GM18951 (cell line): ENCODE measurements at regions of chr13 and their contacts with region 1.

Region 1: GRCh38 chr13:43786773-43787517 is at the start of gene ENOX1:
- POLR2A ChIP-seq: no peak

Region 2: DNA sequence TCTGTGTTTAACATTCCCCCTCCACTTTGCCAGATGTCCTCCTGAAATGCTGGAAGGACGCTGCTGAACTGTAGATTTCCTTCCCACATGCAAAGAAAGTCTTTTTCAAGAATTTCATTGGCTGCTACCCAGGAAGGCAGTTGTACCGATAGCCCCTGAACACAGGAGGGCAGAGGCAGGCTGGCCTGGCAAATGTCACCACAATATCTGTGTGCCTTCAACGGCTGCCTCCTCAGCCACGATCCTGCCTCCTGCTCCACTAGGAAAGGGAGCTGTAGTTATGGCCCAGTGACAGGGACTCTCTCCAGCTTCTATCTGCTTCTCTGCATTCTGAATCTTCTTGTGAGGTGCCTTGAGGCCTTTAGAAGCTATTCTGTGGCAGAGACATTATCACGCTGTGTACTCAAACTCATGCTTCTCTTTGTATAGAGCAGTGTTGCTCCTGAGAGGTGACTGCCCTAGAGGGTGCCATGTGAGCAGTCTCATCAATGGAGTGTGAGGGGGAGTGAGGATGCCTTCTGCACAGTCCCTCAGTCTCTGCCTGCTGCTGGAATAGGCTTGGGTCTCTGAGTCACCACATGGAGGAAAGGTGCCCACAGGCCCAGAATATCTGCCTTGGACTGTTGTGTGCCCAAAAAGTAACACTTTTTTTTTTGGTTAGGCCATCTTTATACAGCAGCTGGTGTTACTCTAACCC is 483.8 kb before region 1 on chr13:
- in situ Hi-C with region 1: loop called (anchors 25 kb)
- POLR2A ChIP-seq: no peak

Region 3: DNA sequence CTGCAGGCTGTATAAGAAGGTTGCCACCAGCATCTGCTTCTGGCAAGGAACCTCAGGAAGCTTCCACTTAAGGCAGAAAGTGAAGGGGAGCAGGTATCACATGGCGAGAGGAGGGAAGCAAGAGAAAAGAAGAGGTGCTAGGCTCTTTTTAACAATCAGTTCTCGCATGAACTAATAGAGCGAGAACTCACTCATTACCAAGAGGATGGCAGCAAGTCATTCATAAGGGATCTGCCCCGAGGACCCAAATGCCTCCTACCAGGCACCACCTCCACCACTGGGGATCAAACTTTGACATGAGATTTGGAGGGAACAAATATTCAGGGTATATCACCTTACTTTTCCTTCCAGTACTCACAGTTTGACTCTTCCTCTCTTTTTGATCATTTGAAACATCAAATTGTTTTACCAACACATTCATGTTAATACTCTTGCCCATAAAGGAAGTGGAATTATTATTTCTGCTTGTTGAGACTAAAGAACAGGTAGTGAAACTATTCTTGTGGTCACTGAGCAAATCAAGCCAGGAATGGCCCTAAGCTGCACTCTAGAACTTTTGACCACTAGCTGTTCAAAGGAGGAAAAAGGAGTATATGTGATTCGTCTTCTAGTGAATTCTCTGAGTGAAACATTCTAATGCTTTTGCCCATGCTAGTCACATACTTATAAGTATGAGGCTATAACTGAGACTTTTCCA is 137.8 kb after region 1 on chr13:
- in situ Hi-C with region 1: no loop called
- POLR2A ChIP-seq: no peak

Region 4: GRCh38 chr13:44318161-44318560 is 531.2 kb after region 1 on chr13:
- in situ Hi-C with region 1: no loop called
- POLR2A ChIP-seq: no peak

Region 5: GRCh38 chr13:44609137-44609536 is 822.2 kb after region 1 on chr13:
- in situ Hi-C with region 1: no loop called
- POLR2A ChIP-seq: no peak

Region 6: GRCh38 chr13:45500492-45501174 is 1713.7 kb after region 1 on chr13:
- in situ Hi-C with region 1: no loop called
- POLR2A ChIP-seq: no peak